RWPE1 (cell line): ENCODE measurements at regions of chr1 and their contacts with region 1.

Region 1: GRCh38 chr1:165392634-165393571 is 36.4 kb upstream of the LMX1A start:
- DNase-seq: peak; percentile 80
- H3K27ac ChIP-seq: no peak overlapping the region
- CTCF ChIP-seq: peak; percentile 94

Region 2: DNA sequence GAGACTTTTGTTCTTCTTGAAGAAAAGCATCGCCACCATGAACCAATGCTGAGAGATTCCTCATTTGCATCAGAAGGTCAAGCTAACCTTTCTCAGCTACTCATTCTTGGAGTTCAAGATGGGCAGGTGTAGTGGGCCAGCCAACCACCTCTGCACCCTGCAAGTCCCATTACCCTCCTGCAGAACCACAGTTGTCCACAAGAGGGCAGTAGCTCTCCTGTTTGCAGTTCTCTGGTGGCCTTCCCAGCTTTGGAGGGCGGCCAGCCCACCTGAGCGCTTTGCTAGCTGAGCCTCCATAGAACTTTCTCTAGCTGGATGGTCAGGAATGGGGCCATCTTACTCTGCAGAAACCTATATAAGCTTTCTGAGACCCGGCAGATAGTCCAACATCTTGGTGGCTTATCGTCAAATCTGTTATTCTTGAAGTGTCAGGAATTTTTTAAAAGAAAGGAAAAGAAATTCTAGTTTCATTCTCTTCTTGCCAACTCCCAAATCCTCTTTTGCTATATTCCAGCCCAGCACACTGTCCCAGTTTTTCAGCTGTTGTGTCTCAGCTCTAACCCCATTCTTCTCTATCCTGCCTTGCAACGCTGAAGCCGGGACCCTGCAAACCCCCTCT is 25.4 kb before region 1 on chr1:
- CTCF ChIA-PET with region 1: interaction called, 11 read pairs
- POLR2A ChIA-PET with region 1: no interaction called
- DNase-seq: peak; percentile 60
- H3K27ac ChIP-seq: no peak overlapping the region
- CTCF ChIP-seq: peak; percentile 93

Region 3: DNA sequence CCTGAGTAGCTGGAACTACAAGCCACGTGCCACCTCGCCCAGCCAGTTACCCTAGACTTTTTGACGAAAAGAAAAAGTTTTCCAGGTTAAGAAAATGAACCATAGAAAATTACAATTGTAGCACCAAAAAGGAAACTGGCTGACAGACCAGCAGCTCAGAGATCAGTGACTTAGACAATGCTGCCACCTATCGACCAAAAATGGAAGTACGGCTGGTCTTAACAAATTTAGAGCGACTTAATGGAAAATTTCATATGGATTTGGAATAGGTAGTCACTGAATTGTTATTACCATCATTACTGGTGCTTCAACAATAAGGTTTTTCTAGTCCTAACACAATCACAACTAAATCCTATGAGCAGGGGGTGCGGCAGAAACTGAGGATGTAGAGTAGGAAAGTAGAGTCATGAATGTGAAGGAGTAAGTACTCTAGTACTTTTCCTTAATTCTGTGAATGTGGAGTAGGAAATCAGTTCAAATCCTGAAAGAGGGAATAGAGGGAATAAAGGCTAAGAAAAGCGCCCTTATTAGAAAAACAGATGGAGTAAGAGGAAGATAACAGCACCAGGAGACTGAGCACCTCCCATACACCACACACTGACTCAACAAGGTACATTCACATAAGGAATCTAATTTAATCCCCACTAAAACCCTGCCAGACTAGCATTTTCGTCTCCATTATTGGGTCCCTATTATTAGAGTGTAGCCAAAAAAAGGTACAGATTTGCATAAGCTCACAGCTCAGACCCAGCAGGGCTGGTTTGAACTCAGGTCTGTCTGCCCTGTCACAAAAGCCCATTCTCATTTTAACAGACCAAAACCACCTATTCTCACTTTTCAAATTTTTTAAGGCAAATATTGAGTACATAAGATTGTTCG is 200.3 kb after region 1 on chr1:
- CTCF ChIA-PET with region 1: interaction called, 33 read pairs
- POLR2A ChIA-PET with region 1: no interaction called
- DNase-seq: peak; percentile 50
- H3K27ac ChIP-seq: no peak overlapping the region
- CTCF ChIP-seq: peak; percentile 88

Region 4: GRCh38 chr1:165763442-165763841 is 370.5 kb after region 1 on chr1:
- CTCF ChIA-PET with region 1: interaction called, 10 read pairs
- POLR2A ChIA-PET with region 1: no interaction called
- DNase-seq: no peak
- H3K27ac ChIP-seq: no peak overlapping the region
- CTCF ChIP-seq: no peak